K562 (cell line): ENCODE measurements at regions of chr7 and their contacts with region 1.

Region 1: DNA sequence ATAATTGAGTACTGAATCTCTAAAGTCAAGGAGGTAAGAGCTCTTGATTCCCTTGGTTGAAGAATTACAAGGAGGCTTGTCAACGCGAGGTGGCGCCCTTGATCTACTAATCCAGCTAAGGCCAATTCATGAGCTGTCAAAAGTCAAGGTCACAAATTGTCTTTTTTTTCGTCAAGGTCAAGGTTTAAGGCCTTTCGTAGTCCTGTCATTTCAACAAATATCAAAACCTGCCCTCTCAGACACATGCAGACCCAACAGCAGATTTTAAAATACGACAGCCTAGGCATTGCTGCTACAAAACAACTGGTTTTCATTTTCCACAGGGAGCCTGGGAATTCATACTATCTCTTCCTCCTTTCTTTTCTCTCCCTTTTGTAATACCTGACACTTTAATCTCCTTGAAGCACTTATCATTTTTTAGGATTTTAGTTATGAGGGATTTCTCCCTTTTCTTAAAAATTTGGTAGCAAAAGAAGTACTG is 3.6 kb downstream of the HOXA13 start:
- DNase-seq: peak; percentile 65 to 77 (median 70)
- ATAC-seq: peak; percentile 73
- H3K4me3 ChIP-seq: no peak overlapping the region
- H3K27ac ChIP-seq: no peak overlapping the region
- H3K4me1 ChIP-seq: peaks cover 0 to 20% of the 10 kb centered on the region in 2 experiments; a peak in 1 of 5 replicates
- H3K27me3 ChIP-seq: peaks cover 23 to 49% of the 10 kb centered on the region in 2 experiments
- CTCF ChIP-seq: peak; percentile 66 to 84 (median 76)
- EP300 ChIP-seq: no peak
- POLR2A ChIP-seq: no peak
- RAD21 ChIP-seq: peak; percentile 89 to 93

Region 2: DNA sequence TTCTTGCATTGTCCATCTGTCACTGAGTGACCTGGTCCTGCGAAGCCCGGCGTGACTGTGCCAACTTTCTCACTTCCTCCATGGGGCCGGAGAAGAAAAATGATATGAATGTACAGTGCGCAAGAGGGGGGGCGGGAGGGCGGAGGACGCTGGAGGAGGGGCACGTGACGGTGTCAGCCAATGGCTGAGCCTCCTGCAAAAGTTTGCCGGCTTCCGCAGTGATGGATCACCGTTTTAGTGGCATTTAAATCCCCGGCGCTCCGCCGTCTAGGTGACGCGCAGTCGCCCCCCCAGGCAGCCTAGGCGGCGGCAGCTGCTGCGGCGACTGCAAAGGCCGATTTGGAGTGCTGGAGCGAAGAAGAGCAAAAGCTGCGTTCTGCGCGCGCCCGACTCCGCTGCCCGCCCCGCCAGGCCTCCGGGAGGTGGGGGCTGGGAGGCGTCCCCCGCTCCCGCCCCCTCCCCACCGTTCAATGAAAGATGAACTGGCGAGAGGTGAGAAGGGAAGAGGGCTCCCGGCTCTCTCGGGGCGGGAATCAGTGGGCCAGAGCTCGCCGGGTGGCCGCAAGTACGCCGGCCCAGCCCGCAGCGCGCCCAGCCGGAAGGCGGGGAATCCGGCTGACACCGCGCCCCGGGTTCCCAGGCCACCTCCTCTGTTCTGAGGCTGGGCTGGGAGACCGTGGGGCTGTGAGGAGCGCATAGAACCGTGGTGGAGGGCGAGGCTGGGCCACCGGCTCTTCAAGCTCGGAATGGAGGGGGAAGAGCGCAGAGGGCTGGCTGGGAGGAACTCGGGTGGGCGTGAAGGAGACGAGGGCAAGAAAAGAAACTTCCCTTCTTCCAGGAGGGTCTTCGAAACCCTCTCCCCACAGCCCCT is 100.2 kb before region 1 on chr7 and contains the start of gene HOXA1:
- CTCF ChIA-PET with region 1: no interaction called
- POLR2A ChIA-PET with region 1: no interaction called
- in situ Hi-C with region 1: no loop called
- intact Hi-C with region 1: no loop called
- DNase-seq: peak; percentile 6 to 73 (median 66)
- ATAC-seq: peak; percentile 72
- H3K4me3 ChIP-seq: no peak within 1 kb of the TSS
- H3K27ac ChIP-seq: no peak within 1 kb of the TSS
- H3K4me1 ChIP-seq: peaks cover 0 to 13% of the 10 kb centered on the region in 2 experiments; a peak in 2 of 5 replicates
- H3K27me3 ChIP-seq: peaks cover 40 to 60% of the 10 kb centered on the region in 2 experiments
- CTCF ChIP-seq: no peak
- EP300 ChIP-seq: no peak
- POLR2A ChIP-seq: no peak
- RAD21 ChIP-seq: no peak
- polyA plus RNA-seq, gene HOXA1: 0.03 TPM in 1 of 2 experiments, not detected in the other

Region 3: GRCh38 chr7:27576360-27576944 is 380.1 kb after region 1 on chr7:
- CTCF ChIA-PET with region 1: interaction called, 11 read pairs
- POLR2A ChIA-PET with region 1: no interaction called
- in situ Hi-C with region 1: loop called (anchors 10 kb)
- intact Hi-C with region 1: loop called (anchors 5 kb)
- DNase-seq: peak; percentile 16 to 51 (median 24)
- ATAC-seq: peak; percentile 80
- H3K4me3 ChIP-seq: no peak overlapping the region
- H3K27ac ChIP-seq: no peak overlapping the region
- H3K4me1 ChIP-seq: no peaks in the 10 kb centered on the region
- H3K27me3 ChIP-seq: no peaks in the 10 kb centered on the region
- CTCF ChIP-seq: peak in 2 of 3 experiments; percentile 34 to 63; a peak in 3 of 6 replicates
- EP300 ChIP-seq: no peak
- POLR2A ChIP-seq: no peak
- RAD21 ChIP-seq: peak; percentile 44 to 69

Region 4: GRCh38 chr7:27774717-27775328 is 578.5 kb after region 1 on chr7:
- CTCF ChIA-PET with region 1: interaction called, 4 read pairs
- POLR2A ChIA-PET with region 1: no interaction called
- in situ Hi-C with region 1: loop called (anchors 10 kb)
- intact Hi-C with region 1: loop called (anchors 5 kb)
- DNase-seq: peak in 3 of 4 experiments; percentile 15 to 54 (median 18)
- ATAC-seq: peak; percentile 69
- H3K4me3 ChIP-seq: no peak overlapping the region
- H3K27ac ChIP-seq: no peak overlapping the region
- H3K4me1 ChIP-seq: peaks cover 0 to 5% of the 10 kb centered on the region in 2 experiments; a peak in 2 of 5 replicates
- H3K27me3 ChIP-seq: no peaks in the 10 kb centered on the region
- CTCF ChIP-seq: peak; percentile 42 to 84 (median 57); a peak in 5 of 6 replicates
- EP300 ChIP-seq: no peak
- POLR2A ChIP-seq: no peak
- RAD21 ChIP-seq: peak; percentile 79 to 80

Region 5: GRCh38 chr7:28020302-28020940 is 824.1 kb after region 1 on chr7:
- CTCF ChIA-PET with region 1: interaction called, 9 read pairs
- POLR2A ChIA-PET with region 1: no interaction called
- in situ Hi-C with region 1: loop called (anchors 5 kb)
- intact Hi-C with region 1: loop called (anchors 1 kb)
- DNase-seq: peak; percentile 75 to 78 (median 77)
- ATAC-seq: peak; percentile 97
- H3K4me3 ChIP-seq: no peak overlapping the region
- H3K27ac ChIP-seq: no peak overlapping the region
- H3K4me1 ChIP-seq: no peaks in the 10 kb centered on the region
- H3K27me3 ChIP-seq: peaks cover 18 to 30% of the 10 kb centered on the region in 2 experiments; a peak in 4 of 5 replicates
- CTCF ChIP-seq: peak; percentile 81 to 95 (median 89)
- EP300 ChIP-seq: no peak
- POLR2A ChIP-seq: no peak
- RAD21 ChIP-seq: peak; percentile 81 to 90

Region 6: DNA sequence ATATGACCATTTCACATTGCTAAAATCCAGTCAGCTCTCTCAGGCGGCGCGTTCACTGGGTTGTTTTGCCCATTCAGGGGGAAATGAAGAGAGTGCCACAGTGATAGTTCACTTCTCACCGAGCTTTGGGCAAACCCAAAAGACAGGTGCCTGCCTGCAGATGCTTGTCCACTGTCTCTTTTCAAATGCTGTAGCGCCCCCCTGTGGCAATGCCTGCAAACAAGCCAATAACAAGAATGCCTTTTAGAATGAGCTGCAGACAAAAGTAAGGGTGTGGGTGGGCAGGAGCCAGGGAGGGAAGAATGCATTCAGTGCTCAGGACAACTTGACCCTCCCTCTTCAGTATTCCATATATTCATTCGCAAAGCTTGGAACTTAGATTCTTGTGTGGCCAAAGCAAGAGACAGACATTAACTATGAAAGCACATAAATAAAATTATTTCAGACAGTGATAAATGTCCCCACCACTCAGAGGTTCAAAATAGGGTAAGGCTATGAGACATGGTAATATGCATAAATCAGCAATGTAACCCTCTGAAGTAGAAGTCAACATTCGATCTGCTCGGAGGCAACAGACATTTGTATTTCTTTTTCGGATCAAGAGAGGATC is 897.4 kb after region 1 on chr7:
- CTCF ChIA-PET with region 1: no interaction called
- POLR2A ChIA-PET with region 1: no interaction called
- in situ Hi-C with region 1: no loop called
- intact Hi-C with region 1: loop called (anchors 2 kb)
- DNase-seq: peak; percentile 46 to 72 (median 50)
- ATAC-seq: peak; percentile 85
- H3K4me3 ChIP-seq: no peak overlapping the region
- H3K27ac ChIP-seq: no peak overlapping the region
- H3K4me1 ChIP-seq: no peaks in the 10 kb centered on the region
- H3K27me3 ChIP-seq: peaks cover under 1 to 22% of the 10 kb centered on the region in 2 experiments; a peak in 2 of 5 replicates
- CTCF ChIP-seq: peak; percentile 63 to 68 (median 65)
- EP300 ChIP-seq: no peak
- POLR2A ChIP-seq: no peak
- RAD21 ChIP-seq: peak; percentile 48 to 63